Left ventricle myocardium inferior (tissue), 1 donor: ENCODE measurements at regions of chr12 and their contacts with region 1.

Region 1: GRCh38 chr12:55930771-55931316 is at the start of gene DGKA:
- DNase-seq: peak; percentile 25
- H3K4me3 ChIP-seq: peak within 1 kb of the TSS; percentile 84
- H3K27ac ChIP-seq: peak within 1 kb of the TSS; percentile 91
- H3K4me1 ChIP-seq: peaks cover 75% of the 10 kb centered on the region
- H3K27me3 ChIP-seq: no peaks in the 10 kb centered on the region
- CTCF ChIP-seq: peak; percentile 64
- total RNA-seq, gene DGKA: 6.5 TPM

Region 2: DNA sequence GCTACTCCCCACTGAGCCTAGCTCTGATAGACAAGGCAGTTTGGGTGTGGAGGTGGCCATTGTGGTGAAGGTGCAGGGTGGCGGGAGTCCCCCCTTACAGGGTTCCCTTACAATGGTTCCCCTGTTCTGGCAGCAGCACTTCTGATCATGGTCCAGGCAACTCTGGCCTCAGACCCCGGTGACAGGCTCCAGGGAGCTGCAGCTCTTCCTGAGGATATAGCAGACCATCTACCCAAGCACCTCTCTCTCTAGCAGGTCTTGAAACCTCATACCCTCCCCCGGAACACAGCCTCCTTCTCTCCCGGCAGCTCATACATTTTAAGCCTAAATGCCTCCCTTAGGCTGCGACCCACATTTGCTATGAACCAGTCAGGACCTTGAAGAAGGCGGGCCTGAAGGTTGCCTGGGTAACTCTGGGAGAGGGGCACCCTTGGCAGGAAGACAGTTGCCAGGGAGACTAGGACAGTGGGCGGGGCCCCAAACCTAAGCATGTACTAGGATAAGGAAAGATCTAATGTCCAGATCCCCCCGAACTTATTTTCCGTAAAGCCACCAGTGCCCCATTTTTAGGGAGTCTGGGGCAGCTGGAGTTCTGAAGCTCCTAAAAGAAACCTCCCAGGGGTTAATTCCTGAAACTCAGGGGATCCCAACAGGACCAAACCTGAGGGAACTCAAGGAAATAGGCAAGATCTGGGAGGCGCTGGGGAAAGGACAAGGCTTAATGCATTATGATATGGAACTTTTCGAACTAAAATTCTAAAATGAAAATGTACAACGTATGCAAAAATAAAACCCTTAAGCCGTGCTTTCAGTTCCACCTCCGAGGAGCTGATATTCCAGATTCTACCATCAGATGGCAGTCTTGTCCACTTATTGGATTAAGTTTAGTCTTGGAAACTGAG is 192.5 kb before region 1 on chr12:
- intact Hi-C with region 1: loop called (anchors 5 kb)
- DNase-seq: peak; percentile 80
- H3K4me3 ChIP-seq: peak overlapping the region; percentile 66
- H3K27ac ChIP-seq: peak overlapping the region; percentile 75
- H3K4me1 ChIP-seq: peaks cover 26% of the 10 kb centered on the region
- H3K27me3 ChIP-seq: no peaks in the 10 kb centered on the region
- CTCF ChIP-seq: peak; percentile 91

Region 3: GRCh38 chr12:55829967-55830600 is 100.8 kb before region 1 on chr12:
- intact Hi-C with region 1: loop called (anchors 10 kb)
- DNase-seq: peak; percentile 57
- H3K4me3 ChIP-seq: peak overlapping the region; percentile 97
- H3K27ac ChIP-seq: peak overlapping the region; percentile 96
- H3K4me1 ChIP-seq: peaks cover 76% of the 10 kb centered on the region
- H3K27me3 ChIP-seq: no peaks in the 10 kb centered on the region
- CTCF ChIP-seq: no peak